ENCODE measurements at regions of chr14 and their contacts with region 1.

Region 1: GRCh38 chr14:24160850-24161804 is at the start of gene IRF9:
- DNase-seq: peak; percentile 99
- ATAC-seq: peak; percentile 87
- H3K4me3 Mint-ChIP-seq: peak within 1 kb of the TSS; percentile 93
- H3K27ac Mint-ChIP-seq: peak within 1 kb of the TSS; percentile 99
- H3K4me1 Mint-ChIP-seq: peaks cover 50% of the 10 kb centered on the region
- H3K27me3 Mint-ChIP-seq: no peaks in the 10 kb centered on the region
- total RNA-seq, gene IRF9: 238 to 295 TPM

Region 2: DNA sequence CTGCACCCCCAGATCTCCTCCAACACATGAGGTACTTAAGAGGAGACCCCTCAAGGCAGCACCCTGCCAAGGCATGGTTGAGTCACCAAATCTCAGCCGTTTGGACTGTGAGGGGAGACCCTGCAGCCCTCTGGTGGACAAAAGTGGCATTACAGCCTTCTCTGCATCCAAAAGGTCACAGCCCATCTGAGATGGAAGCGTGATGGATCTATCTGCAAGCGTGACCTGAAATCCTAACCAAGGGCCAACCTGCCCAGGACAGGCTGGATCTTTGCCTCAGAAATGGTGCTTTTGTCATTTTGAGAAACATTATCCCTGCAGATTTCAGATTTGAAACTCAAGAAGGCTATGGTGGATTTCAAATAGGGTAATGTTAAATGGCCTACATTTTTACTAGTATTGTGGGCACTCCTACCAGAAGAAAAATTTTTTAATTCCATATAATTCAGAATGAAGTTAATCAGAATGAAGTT is 231.3 kb before region 1 on chr14:
- CTCF ChIA-PET with region 1: no interaction called
- DNase-seq: peak; percentile 88
- ATAC-seq: peak; percentile 85
- H3K4me3 Mint-ChIP-seq: no peak overlapping the region
- H3K27ac Mint-ChIP-seq: no peak overlapping the region
- H3K4me1 Mint-ChIP-seq: no peaks in the 10 kb centered on the region
- H3K27me3 Mint-ChIP-seq: peaks cover 6% of the 10 kb centered on the region

Region 3: GRCh38 chr14:24108336-24108874 is 52.7 kb before region 1 on chr14:
- CTCF ChIA-PET with region 1: interaction called, 40 read pairs
- DNase-seq: no peak
- ATAC-seq: no peak
- H3K4me3 Mint-ChIP-seq: peak overlapping the region; percentile 17
- H3K27ac Mint-ChIP-seq: peak overlapping the region; percentile 98
- H3K4me1 Mint-ChIP-seq: peaks cover 36% of the 10 kb centered on the region
- H3K27me3 Mint-ChIP-seq: no peaks in the 10 kb centered on the region

Region 4: DNA sequence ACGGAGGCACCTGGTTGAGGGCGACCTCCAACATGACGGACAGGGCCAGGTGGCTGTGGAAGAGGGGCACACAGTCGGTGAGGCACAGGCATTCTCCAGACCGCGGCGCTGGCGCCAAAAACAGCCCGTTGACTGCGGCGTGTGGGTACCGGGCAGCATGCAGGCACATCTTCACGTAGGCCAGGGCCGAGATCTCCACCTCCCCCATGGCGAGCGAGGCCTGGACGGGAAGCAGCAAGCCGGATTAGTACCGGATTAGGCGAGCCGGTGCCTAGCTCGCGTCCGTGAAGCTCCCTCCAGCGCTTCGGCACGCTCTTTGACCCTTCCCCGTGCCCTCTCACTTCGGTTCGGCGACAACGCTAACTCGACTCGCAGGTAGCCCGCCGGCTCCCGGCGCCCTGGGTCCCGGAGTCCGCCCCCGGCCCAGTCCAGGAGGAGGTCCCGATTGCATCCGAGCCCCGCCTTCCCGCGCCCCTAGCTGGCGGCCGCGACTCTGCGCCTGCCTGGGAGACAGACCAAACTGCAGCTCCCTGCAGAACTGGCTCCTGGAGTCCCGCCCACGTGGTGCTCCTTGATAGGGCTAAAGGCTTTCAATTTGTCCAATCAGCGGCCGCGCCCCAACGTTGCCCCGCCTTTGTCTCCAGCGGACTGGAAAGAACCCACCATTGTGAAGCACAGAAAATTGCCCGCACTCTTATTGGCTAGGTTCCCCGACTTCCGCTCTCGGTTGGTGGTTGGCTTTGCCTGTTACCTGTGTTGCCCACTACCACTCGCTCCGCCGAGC is 19.8 kb before region 1 on chr14 and contains the start of gene EMC9:
- CTCF ChIA-PET with region 1: interaction called, 99 read pairs
- DNase-seq: peak; percentile 100
- ATAC-seq: peak; percentile 91
- H3K4me3 Mint-ChIP-seq: peak within 1 kb of the TSS; percentile 98
- H3K27ac Mint-ChIP-seq: peak within 1 kb of the TSS; percentile 91
- H3K4me1 Mint-ChIP-seq: peaks cover 74% of the 10 kb centered on the region
- H3K27me3 Mint-ChIP-seq: no peaks in the 10 kb centered on the region
- total RNA-seq, gene EMC9: 45.5 to 56.1 TPM

Region 5: DNA sequence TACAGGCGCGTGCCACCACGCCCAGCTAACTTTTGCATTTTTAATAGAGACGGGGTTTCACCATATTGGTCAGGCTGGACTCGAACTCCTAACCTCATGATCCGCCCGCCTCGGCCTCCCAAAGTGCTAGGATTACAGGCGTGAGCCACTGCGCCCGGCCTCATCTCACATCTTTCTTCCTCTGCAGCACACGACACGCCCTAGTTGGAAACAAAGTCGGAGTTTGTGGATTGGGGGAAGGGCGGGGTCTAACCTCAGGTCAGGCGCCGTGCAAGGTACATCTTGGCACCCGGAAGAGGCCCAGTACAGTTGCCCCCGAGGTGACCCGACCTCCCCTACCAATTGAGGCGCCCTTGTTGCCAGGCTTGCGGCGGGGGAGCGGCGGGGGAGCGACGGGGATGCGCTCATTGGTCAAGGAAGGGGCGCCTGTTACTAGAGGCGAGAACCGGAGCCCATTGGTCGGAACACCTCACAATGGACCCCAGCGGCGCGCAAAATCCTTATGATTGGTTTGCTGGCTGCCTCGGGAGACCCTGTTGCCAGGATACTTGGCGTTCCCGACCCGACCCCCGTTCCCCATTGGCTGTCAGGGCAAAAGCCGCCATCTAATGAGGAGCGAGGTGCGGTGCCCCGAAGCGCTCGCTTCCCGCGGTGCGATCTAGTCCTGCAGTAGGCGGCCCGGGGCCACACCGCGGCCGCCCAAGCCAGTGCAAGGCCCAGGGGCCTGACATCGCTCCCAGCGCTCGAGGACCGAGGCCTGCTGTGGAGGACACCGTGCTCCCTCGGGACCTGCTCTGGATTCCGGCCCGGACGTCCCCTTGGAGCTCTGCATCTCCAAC is 10.5 kb after region 1 on chr14 and contains the start of gene REC8:
- CTCF ChIA-PET with region 1: interaction called, 35 read pairs
- DNase-seq: peak; percentile 93
- ATAC-seq: peak; percentile 87
- H3K4me3 Mint-ChIP-seq: peak within 1 kb of the TSS; percentile 77
- H3K27ac Mint-ChIP-seq: peak within 1 kb of the TSS; percentile 83
- H3K4me1 Mint-ChIP-seq: peaks cover 45% of the 10 kb centered on the region
- H3K27me3 Mint-ChIP-seq: no peaks in the 10 kb centered on the region
- total RNA-seq, gene REC8: 52.9 to 92.8 TPM

Region 6: DNA sequence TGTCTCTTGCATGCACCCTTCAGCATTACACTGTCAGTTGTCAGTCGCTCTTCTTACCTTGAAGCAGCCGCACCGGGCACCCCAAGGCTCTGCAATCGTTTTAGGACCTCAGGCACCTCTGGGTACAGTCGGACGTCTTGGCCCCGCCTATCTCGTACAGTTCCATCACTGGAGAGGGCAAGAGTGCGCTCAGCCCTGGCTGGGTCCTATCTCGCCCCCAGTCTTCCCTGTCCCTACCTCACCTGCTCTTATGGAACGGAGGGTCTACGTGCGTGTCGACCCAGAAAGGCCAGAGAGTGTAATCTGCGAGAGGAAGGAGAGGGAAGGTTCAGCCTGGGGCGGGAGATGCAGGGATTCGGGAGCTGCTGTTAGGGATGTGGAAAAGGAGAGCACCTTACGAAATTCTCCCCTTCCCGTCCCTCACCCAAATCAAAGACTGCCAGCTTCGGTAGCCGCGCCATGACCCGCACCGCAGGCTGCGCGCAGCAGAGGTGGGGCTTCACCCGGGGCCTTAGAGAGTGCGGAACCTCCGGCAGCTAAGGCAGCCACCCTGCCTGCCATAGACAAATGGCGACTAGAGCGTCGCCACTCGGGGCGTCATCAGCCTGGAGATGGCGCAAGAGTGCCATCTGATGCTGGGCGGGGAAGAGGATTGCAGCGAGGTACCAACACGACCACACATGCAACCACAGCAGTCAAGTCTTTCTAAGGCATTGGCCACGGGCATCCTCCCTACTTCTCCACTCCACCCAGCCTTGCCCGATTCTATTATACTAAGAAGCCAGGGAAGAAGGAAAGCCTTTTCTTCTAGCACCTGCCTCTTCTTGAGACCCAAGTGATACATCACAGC is 54.6 kb after region 1 on chr14 and contains the start of gene MDP1:
- CTCF ChIA-PET with region 1: interaction called, 17 read pairs
- DNase-seq: peak; percentile 94
- ATAC-seq: peak; percentile 76
- H3K4me3 Mint-ChIP-seq: peak within 1 kb of the TSS; percentile 97
- H3K27ac Mint-ChIP-seq: peak within 1 kb of the TSS; percentile 99
- H3K4me1 Mint-ChIP-seq: peaks cover 47% of the 10 kb centered on the region
- H3K27me3 Mint-ChIP-seq: no peaks in the 10 kb centered on the region
- total RNA-seq, gene MDP1: 11.4 to 16.9 TPM